ENCODE measurements at regions of chr2 and their contacts with region 1.

Region 1: DNA sequence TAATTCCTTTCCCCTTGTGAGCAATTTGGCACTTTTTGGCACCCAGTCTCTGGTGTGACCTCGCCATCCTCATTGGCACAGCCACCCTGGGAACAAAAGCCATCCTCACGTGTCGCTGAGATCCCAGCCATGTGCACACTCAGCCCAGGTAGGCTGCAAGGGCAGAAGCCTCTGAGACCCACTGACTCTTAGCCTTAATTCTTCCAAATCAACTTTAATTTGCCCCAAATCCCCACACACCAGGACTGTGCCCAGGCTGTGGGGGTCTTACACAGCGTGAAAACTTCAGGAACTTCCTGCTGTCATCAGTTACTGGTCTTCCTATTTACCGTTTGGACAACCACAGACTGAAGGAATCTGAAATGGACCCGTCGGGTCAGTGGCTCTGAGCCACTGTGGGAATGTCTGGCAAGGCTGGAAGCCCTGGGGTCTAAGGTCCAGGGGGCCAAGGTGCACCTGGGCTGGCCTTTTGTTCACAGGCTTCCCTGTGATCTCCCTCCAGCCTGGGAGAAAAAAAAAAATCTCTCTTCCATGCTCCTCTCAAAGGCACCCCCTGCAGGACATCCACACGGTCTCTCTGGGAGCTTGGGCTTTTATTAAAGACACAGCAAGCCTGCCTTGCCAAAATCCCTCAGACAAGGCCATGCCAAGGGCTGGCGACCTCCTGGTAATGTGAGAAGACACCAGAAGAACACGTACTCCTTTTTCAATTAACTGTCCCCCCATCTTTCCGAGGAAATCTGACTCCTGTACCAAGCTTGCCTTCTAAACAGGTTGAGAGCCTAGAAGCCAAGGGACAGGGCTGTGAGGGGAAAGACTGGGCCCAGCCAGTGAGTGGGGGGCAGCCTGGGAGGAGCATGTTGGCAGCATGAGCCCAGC is 42.1 kb upstream of the LAPTM4A start:
- DNase-seq: no peak
- H3K4me3 ChIP-seq: no peak overlapping the region
- H3K27ac ChIP-seq: peak overlapping the region; percentile 65
- H3K4me1 ChIP-seq: peaks cover 44% of the 10 kb centered on the region
- H3K27me3 ChIP-seq: no peaks in the 10 kb centered on the region
- CTCF ChIP-seq: peak; percentile 35 to 44 (median 36)
- POLR2A ChIP-seq: no peak

Region 2: DNA sequence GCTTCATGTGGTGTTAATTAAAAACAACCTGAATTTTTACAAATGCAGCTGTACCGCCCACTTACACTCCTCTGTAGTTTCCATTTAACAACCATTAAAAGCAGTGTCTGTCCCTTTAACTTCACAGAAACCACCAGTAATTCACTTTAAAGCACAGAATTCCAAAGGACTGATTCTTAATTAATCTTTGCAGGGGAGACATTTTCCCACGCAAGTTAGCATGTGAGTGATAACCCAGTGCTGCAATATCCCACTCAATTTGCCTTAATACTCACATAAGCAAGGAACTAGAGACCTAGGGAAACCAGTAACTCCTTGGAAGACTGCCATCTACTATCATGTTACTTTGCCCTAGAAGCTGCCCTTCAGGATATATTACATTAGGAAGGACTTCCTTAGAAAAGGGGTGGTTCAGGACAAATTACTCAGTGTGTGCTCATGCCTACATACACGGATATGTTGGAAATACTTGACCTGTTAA is 837.3 kb before region 1 on chr2:
- intact Hi-C with region 1: no loop called
- DNase-seq: no peak
- H3K4me3 ChIP-seq: no peak overlapping the region
- H3K27ac ChIP-seq: no peak overlapping the region
- H3K4me1 ChIP-seq: no peaks in the 10 kb centered on the region
- H3K27me3 ChIP-seq: no peaks in the 10 kb centered on the region
- CTCF ChIP-seq: no peak
- POLR2A ChIP-seq: no peak

Region 3: GRCh38 chr2:19955544-19956422 is 137.7 kb before region 1 on chr2:
- intact Hi-C with region 1: loop called (anchors 5 kb)
- DNase-seq: no peak
- H3K4me3 ChIP-seq: no peak overlapping the region
- H3K27ac ChIP-seq: no peak overlapping the region
- H3K4me1 ChIP-seq: no peaks in the 10 kb centered on the region
- H3K27me3 ChIP-seq: no peaks in the 10 kb centered on the region
- CTCF ChIP-seq: peak; percentile 30 to 57 (median 31)
- POLR2A ChIP-seq: no peak

Region 4: GRCh38 chr2:20012299-20013125 is 81.0 kb before region 1 on chr2 and contains the start of gene MATN3:
- intact Hi-C with region 1: loop called (anchors 5 kb)
- DNase-seq: no peak
- H3K4me3 ChIP-seq: peak within 1 kb of the TSS; percentile 52 to 70
- H3K27ac ChIP-seq: peak within 1 kb of the TSS; percentile 65
- H3K4me1 ChIP-seq: peaks cover 6% of the 10 kb centered on the region
- H3K27me3 ChIP-seq: no peaks in the 10 kb centered on the region
- CTCF ChIP-seq: no peak
- POLR2A ChIP-seq: no peak
- total RNA-seq, gene MATN3: 3.9 TPM

Region 5: DNA sequence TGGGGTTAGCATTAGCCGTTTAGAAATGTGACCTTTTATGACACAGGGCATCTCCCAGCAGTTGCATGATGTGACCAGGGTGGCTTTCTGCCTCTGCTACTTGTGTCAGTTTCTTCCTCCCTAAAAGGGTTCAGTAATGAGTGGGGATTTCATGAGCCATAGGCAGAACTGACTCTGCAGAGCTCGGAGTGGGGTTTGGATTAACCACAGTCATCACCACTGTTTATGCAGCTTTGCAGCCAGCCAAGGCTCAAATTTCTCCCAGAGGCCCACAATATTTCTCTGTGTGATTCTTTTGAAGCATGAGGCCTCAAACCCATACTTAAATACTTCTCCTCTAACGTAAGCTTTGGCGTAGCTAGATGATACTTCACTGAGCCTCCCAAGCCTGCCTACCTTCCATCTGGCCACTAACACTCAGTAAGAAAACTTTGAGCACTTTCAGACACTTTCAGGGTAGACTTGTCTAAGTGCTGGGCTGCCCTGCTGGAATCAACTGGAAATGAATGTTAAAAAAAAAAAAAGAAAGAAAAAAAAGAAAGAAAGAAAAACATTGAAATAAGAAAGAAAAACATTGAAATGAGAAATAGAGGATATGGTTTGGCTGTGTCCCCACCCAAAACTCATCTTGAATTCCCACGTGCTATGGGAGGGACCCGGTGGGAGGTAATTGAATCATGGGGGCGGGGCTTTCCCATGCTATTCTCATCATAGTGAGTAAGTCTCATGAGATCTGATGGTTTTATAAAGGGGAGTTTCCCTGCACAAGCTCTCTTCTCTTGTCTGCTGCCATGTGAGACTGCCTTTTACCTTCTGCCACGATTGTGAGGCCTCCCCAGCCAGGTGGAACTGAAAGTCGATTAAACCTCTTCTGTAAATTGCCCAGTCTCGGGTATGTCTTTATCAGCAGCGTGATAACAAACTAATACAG is 30.6 kb before region 1 on chr2:
- intact Hi-C with region 1: no loop called
- DNase-seq: peak in 1 of 2 donors; percentile 83
- H3K4me3 ChIP-seq: no peak overlapping the region
- H3K27ac ChIP-seq: peak overlapping the region; percentile 78
- H3K4me1 ChIP-seq: peaks cover 23% of the 10 kb centered on the region
- H3K27me3 ChIP-seq: no peaks in the 10 kb centered on the region
- CTCF ChIP-seq: no peak
- POLR2A ChIP-seq: no peak